ENCODE measurements at regions of chr4 and their contacts with region 1.

Region 1: DNA sequence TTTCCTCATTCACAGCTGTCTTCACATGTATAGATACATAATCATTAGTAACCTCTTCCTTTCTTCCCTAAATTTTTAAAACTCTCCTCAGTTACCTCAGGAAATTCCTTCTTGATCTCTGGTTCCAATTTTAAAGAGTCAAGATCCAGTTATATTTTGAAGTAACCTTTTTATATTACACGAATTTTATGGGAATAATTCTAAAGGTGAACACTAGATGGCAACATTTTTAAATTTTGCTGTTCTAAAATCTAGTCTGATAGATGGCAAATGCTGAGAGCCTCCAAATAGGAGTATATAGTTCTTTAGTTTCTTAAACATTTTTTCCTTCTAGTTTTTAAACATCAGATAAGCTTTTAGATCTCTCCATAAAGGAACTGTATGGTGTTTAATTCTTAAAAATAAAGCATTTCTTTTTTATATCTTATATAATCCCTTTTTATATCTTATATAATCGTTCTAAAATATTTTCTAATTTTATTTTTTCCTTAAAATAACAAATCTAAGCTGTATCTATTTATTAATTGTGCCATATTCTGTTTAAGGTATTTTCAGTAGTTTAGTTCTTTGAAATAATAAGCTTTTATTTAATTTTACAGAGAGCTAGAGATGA is 37.9 kb upstream of the PAPSS1 start:
- DNase-seq: peak; percentile 48
- H3K4me3 ChIP-seq: no peak overlapping the region
- H3K27ac ChIP-seq: no peak overlapping the region
- H3K4me1 ChIP-seq: no peaks in the 10 kb centered on the region
- CTCF ChIP-seq: peak; percentile 87

Region 2: DNA sequence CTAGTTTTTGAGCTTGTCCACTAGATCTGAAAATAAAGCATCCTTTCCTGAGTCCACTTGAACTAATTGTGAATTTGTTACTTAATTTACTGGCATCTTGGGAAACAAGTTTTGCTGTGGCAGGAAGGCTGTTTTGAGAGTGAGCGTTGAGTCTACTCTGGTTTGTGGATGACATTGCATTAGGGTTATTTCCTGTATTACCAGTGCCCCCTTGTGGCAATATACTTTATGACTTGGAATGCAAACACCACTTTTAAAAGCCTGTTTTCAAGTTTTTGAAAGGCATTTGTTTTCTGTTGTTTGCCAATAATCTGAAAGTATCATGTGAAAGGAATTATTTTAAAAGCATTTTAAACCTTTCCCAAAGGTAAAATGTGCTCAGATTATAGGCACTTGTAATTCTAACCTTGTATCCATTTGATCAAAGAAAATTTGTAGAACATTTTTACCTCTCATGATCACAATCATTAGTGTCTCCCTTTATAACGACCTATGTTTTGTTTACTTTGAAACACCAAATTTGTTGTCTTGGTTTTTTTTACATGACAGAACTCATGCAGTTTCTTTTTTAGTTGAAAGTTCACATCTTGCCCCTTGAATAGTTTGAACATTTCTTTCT is 155.4 kb after region 1 on chr4:
- CTCF ChIA-PET with region 1: no interaction called
- POLR2A ChIA-PET with region 1: interaction called, 5 read pairs
- intact Hi-C with region 1: loop called (anchors 1 kb)
- DNase-seq: peak; percentile 75
- H3K4me3 ChIP-seq: no peak overlapping the region
- H3K27ac ChIP-seq: no peak overlapping the region
- H3K4me1 ChIP-seq: no peaks in the 10 kb centered on the region
- CTCF ChIP-seq: peak; percentile 94

Measured in OCI-LY7 (cell line).